CD4-positive, alpha-beta memory T cell (primary cell): ENCODE measurements at regions of chr1 and their contacts with region 1.

Region 1: GRCh38 chr1:150561974-150562445 is 12.8 kb downstream of the ADAMTSL4 start:
- DNase-seq: peak; percentile 75 to 88 (median 79)
- H3K4me3 ChIP-seq: peak overlapping the region; percentile 72 to 79
- H3K4me3 Mint-ChIP-seq: peak overlapping the region; percentile 90 to 99 (median 93)
- H3K27ac ChIP-seq: peak overlapping the region; percentile 93
- H3K27ac Mint-ChIP-seq: peak overlapping the region; percentile 95 to 100 (median 99)
- H3K4me1 ChIP-seq: peaks cover 66% of the 10 kb centered on the region
- H3K4me1 Mint-ChIP-seq: peaks cover 33 to 70% (median 47%) of the 10 kb centered on the region in 4 donors
- H3K27me3 ChIP-seq: no peaks in the 10 kb centered on the region
- H3K27me3 Mint-ChIP-seq: no peaks in the 10 kb centered on the region

Region 2: DNA sequence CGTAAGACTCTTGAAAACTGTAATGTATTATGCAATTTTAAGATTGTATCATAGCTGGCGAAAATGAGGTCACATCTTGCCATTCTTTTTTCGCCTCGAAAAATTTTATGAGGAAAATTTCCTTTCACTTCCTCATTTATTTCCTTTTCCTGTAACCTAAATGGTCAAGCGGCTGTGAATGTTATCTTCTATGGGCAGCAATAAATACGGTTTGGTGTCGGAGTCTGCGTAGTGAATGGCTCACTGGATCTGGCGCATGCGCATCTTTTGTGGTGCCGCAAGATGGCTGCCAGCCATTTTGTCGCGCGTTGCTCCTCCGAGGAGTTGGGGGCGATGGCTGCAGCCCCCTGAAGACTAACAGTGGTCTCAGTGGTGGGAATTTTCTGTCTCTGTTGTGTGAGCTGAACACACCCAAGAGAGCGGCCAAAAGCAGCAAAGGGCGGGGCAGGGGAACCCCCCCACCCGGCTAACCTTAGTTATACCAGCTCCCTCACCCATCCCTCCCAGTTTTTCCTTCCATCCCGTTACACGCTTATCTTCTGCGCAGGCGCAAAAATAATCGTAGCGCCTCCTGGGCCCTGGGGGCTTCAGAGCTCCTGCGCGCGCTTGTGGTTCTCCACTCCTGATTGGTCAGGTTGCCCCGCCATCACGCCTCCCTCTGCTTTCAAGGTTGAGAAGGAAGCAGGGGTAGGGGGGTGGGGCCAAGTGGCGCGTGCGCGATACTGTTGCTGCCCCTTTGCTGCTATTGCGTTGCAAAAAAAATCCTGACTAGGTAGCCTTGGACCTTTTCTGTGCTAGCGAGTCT is 198.4 kb before region 1 on chr1 and contains the start of gene RPRD2:
- CTCF ChIA-PET with region 1: no interaction called
- POLR2A ChIA-PET with region 1: interaction called, 10 read pairs
- intact Hi-C with region 1: loop called (anchors 5 kb)
- DNase-seq: peak; percentile 99 to 100 (median 99)
- H3K4me3 ChIP-seq: peak within 1 kb of the TSS; percentile 98 to 100
- H3K4me3 Mint-ChIP-seq: peak within 1 kb of the TSS; percentile 94 to 100 (median 99)
- H3K27ac ChIP-seq: peak within 1 kb of the TSS; percentile 96
- H3K27ac Mint-ChIP-seq: peak within 1 kb of the TSS; percentile 97 to 100 (median 99)
- H3K4me1 ChIP-seq: peaks cover 27% of the 10 kb centered on the region
- H3K4me1 Mint-ChIP-seq: peaks cover 22 to 49% (median 28%) of the 10 kb centered on the region in 4 donors
- H3K27me3 ChIP-seq: no peaks in the 10 kb centered on the region
- H3K27me3 Mint-ChIP-seq: no peaks in the 10 kb centered on the region
- total RNA-seq, gene RPRD2: 60.0 to 61.0 TPM

Region 3: GRCh38 chr1:150548632-150549495 is 13.1 kb before region 1 on chr1 and contains the start of gene ADAMTSL4:
- CTCF ChIA-PET with region 1: interaction called, 25 read pairs
- POLR2A ChIA-PET with region 1: interaction called, 11 read pairs
- intact Hi-C with region 1: no loop called
- DNase-seq: peak in 2 of 5 donors; percentile 32 to 36
- H3K4me3 ChIP-seq: peak within 1 kb of the TSS; percentile 33 to 47
- H3K4me3 Mint-ChIP-seq: peak within 1 kb of the TSS; percentile 81 to 87 (median 82)
- H3K27ac ChIP-seq: no peak within 1 kb of the TSS
- H3K27ac Mint-ChIP-seq: peak within 1 kb of the TSS in 3 of 7 donors; percentile 25 to 61 (median 59)
- H3K4me1 ChIP-seq: peaks cover 23% of the 10 kb centered on the region
- H3K4me1 Mint-ChIP-seq: peaks cover 13 to 25% (median 15%) of the 10 kb centered on the region in 4 donors
- H3K27me3 ChIP-seq: no peaks in the 10 kb centered on the region
- H3K27me3 Mint-ChIP-seq: peaks cover 11 to 14% of the 10 kb centered on the region in 2 donors
- total RNA-seq, gene ADAMTSL4: 0.23 to 0.33 TPM

Region 4: DNA sequence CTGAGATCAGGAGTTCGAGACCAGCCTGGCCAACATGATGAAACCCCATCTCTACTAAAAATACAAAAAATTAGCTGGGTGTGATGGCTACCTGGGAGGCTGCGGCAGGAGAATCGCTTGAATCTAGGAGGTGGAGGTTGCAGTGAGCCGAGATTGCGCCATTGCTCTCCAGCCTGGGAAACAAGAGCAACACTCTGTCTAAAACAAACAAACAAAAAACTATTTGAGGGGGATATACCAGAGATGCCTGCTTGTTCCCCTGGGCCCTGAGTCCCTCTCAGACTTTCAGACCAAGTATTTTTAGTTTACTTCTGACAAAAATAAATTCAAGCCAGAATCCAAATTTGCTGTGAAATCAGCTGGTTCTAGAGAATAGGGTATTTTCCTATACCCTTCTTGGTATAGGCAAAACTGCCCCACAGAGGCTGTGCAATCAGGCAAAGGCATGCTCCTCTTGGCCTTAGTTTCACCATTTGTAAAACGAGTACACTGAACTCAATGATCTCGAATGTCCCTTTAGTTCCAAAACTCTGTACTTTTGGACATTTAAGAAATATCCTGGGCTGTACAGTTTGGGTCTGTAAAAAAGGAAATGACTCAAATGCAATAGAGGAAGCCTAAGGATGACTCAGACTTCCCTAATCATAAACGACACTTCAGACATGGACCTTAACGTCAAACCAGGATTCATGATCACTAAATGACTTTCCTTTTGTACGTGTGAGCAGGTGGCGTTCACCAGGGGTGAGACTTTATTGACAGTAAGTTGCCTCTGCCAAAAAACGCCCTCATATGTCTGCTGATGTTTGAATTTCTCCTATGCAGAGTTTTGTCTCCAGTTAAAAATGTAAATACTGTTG is 51.3 kb after region 1 on chr1:
- CTCF ChIA-PET with region 1: interaction called, 501 read pairs
- POLR2A ChIA-PET with region 1: interaction called, 439 read pairs
- intact Hi-C with region 1: loop called (anchors 2 kb)
- DNase-seq: peak; percentile 41 to 83 (median 51)
- H3K4me3 ChIP-seq: no peak overlapping the region
- H3K4me3 Mint-ChIP-seq: peak overlapping the region; percentile 27 to 78 (median 58)
- H3K27ac ChIP-seq: peak overlapping the region; percentile 94
- H3K27ac Mint-ChIP-seq: peak overlapping the region; percentile 89 to 100 (median 99)
- H3K4me1 ChIP-seq: peaks cover 63% of the 10 kb centered on the region
- H3K4me1 Mint-ChIP-seq: peaks cover 44 to 70% (median 54%) of the 10 kb centered on the region in 4 donors
- H3K27me3 ChIP-seq: no peaks in the 10 kb centered on the region
- H3K27me3 Mint-ChIP-seq: no peaks in the 10 kb centered on the region

Region 5: DNA sequence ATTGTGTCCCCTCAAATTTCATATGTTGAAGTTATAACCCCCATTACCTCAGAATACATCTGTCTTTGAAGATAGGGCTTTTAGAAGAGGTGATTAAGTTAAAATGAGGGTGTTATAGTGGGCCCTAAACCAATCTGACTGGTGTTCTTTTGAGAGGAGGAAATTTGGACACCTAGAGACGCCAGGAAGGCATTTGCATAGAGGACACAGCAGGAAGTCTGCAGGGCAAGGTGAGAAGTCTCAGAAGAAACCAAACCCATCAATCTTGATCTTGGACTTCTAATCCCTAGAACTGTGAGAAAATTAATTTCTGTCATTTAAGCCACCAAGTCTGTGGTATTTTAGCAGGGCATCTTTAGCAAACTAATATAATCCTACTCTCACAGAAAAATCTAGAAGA is 121.9 kb after region 1 on chr1:
- CTCF ChIA-PET with region 1: interaction called, 12 read pairs
- POLR2A ChIA-PET with region 1: no interaction called
- intact Hi-C with region 1: no loop called
- DNase-seq: no peak
- H3K4me3 ChIP-seq: no peak overlapping the region
- H3K4me3 Mint-ChIP-seq: peak overlapping the region in 4 of 8 donors; percentile 11 to 65 (median 42)
- H3K27ac ChIP-seq: no peak overlapping the region
- H3K27ac Mint-ChIP-seq: peak overlapping the region; percentile 4 to 82 (median 73)
- H3K4me1 ChIP-seq: peaks cover 9% of the 10 kb centered on the region
- H3K4me1 Mint-ChIP-seq: peaks cover 14 to 24% (median 16%) of the 10 kb centered on the region in 4 donors
- H3K27me3 ChIP-seq: no peaks in the 10 kb centered on the region
- H3K27me3 Mint-ChIP-seq: no peaks in the 10 kb centered on the region

Region 6: GRCh38 chr1:150925816-150926741 is 364.1 kb after region 1 on chr1 and contains the start of gene SETDB1:
- CTCF ChIA-PET with region 1: interaction called, 7 read pairs
- POLR2A ChIA-PET with region 1: no interaction called
- intact Hi-C with region 1: loop called (anchors 1 kb)
- DNase-seq: peak; percentile 90 to 95 (median 90)
- H3K4me3 ChIP-seq: peak within 1 kb of the TSS; percentile 80 to 97
- H3K4me3 Mint-ChIP-seq: peak within 1 kb of the TSS; percentile 94 to 96 (median 96)
- H3K27ac ChIP-seq: peak within 1 kb of the TSS; percentile 80
- H3K27ac Mint-ChIP-seq: peak within 1 kb of the TSS; percentile 96 to 98 (median 96)
- H3K4me1 ChIP-seq: peaks cover 22% of the 10 kb centered on the region
- H3K4me1 Mint-ChIP-seq: peaks cover 18 to 38% (median 29%) of the 10 kb centered on the region in 4 donors
- H3K27me3 ChIP-seq: no peaks in the 10 kb centered on the region
- H3K27me3 Mint-ChIP-seq: no peaks in the 10 kb centered on the region
- total RNA-seq, gene SETDB1: 71.4 to 72.6 TPM

Region 7: GRCh38 chr1:151156515-151156819 is 594.5 kb after region 1 on chr1 and contains the start of gene TNFAIP8L2:
- CTCF ChIA-PET with region 1: no interaction called
- POLR2A ChIA-PET with region 1: interaction called, 3 read pairs
- intact Hi-C with region 1: loop called (anchors 5 kb)
- DNase-seq: peak; percentile 61 to 85 (median 65)
- H3K4me3 ChIP-seq: peak within 1 kb of the TSS; percentile 82 to 98
- H3K4me3 Mint-ChIP-seq: peak within 1 kb of the TSS; percentile 98 to 100 (median 98)
- H3K27ac ChIP-seq: peak within 1 kb of the TSS; percentile 68
- H3K27ac Mint-ChIP-seq: peak within 1 kb of the TSS; percentile 89 to 96 (median 94)
- H3K4me1 ChIP-seq: peaks cover 47% of the 10 kb centered on the region
- H3K4me1 Mint-ChIP-seq: peaks cover 25 to 55% (median 35%) of the 10 kb centered on the region in 4 donors
- H3K27me3 ChIP-seq: no peaks in the 10 kb centered on the region
- H3K27me3 Mint-ChIP-seq: no peaks in the 10 kb centered on the region
- total RNA-seq, gene TNFAIP8L2: 45.9 to 49.7 TPM